Naive thymus-derived CD8-positive, alpha-beta T cell (primary cell): ENCODE measurements at regions of chr12 and their contacts with region 1.

Region 1: GRCh38 chr12:120228291-120229070 is 27.6 kb upstream of the RPLP0 start:
- DNase-seq: peak; percentile 78 to 94 (median 86)
- ATAC-seq: peak; percentile 85
- H3K4me3 Mint-ChIP-seq: peak overlapping the region; percentile 56 to 83 (median 74)
- H3K27ac Mint-ChIP-seq: peak overlapping the region; percentile 61 to 91 (median 84)
- H3K4me1 Mint-ChIP-seq: peaks cover 36 to 90% (median 84%) of the 10 kb centered on the region in 4 donors
- H3K27me3 Mint-ChIP-seq: no peaks in the 10 kb centered on the region

Region 2: DNA sequence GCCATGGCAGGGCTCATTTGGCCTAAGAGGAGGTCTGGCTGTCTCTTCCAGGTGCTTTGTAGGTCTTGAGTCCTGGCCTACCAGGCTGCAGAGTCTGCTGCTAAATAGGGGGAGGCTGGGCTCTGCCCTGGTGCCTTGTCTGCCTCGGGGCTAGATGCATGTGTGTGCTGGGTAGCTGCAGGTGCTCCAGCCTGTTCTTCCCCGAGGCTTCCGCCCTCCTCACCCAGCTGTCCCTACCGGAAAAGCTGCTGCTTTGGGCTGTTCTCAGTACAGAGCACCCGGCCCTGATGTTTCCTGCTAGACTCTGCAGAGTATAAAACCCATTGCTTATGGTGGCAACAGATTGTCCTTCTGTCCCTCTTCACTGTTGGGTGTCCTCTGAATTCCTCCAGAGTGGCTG is 149.6 kb before region 1 on chr12:
- POLR2A ChIA-PET with region 1: no interaction called
- DNase-seq: peak in 3 of 10 donors; percentile 15 to 32 (median 21)
- ATAC-seq: peak; percentile 70 to 87
- H3K4me3 Mint-ChIP-seq: peak overlapping the region in 5 of 10 donors; percentile 16 to 71 (median 36)
- H3K27ac Mint-ChIP-seq: peak overlapping the region; percentile 53 to 90 (median 78)
- H3K4me1 Mint-ChIP-seq: peaks cover 20 to 40% (median 34%) of the 10 kb centered on the region in 4 donors
- H3K27me3 Mint-ChIP-seq: no peaks in the 10 kb centered on the region

Region 3: GRCh38 chr12:120242275-120242799 is 13.9 kb after region 1 on chr12:
- POLR2A ChIA-PET with region 1: interaction called, 149 read pairs
- DNase-seq: no peak
- ATAC-seq: no peak
- H3K4me3 Mint-ChIP-seq: peak overlapping the region in 1 of 10 donors; percentile 24
- H3K27ac Mint-ChIP-seq: peak overlapping the region in 4 of 10 donors; percentile 13 to 74 (median 53)
- H3K4me1 Mint-ChIP-seq: peaks cover 25 to 80% (median 76%) of the 10 kb centered on the region in 4 donors
- H3K27me3 Mint-ChIP-seq: no peaks in the 10 kb centered on the region

Region 4: GRCh38 chr12:120257041-120257821 is 28.8 kb after region 1 on chr12:
- POLR2A ChIA-PET with region 1: interaction called, 211 read pairs
- DNase-seq: no peak
- ATAC-seq: no peak
- H3K4me3 Mint-ChIP-seq: peak overlapping the region in 8 of 10 donors; percentile 5 to 68 (median 43)
- H3K27ac Mint-ChIP-seq: peak overlapping the region; percentile 82 to 94 (median 90)
- H3K4me1 Mint-ChIP-seq: peaks cover 40 to 92% (median 89%) of the 10 kb centered on the region in 4 donors
- H3K27me3 Mint-ChIP-seq: no peaks in the 10 kb centered on the region

Region 5: GRCh38 chr12:120265473-120266179 is 37.1 kb after region 1 on chr12 and contains the start of gene PXN:
- POLR2A ChIA-PET with region 1: interaction called, 211 read pairs
- DNase-seq: peak; percentile 82 to 100 (median 92)
- ATAC-seq: peak; percentile 83 to 84
- H3K4me3 Mint-ChIP-seq: peak within 1 kb of the TSS; percentile 89 to 96 (median 94)
- H3K27ac Mint-ChIP-seq: peak within 1 kb of the TSS; percentile 82 to 96 (median 92)
- H3K4me1 Mint-ChIP-seq: peaks cover 16 to 49% (median 43%) of the 10 kb centered on the region in 4 donors
- H3K27me3 Mint-ChIP-seq: peaks cover 0 to 2% (median 0%) of the 10 kb centered on the region in 5 donors
- polyA plus RNA-seq, gene PXN: 64.3 to 95.6 (median 80.4) TPM